ENCODE measurements at regions of chr17 and their contacts with region 1.

Region 1: DNA sequence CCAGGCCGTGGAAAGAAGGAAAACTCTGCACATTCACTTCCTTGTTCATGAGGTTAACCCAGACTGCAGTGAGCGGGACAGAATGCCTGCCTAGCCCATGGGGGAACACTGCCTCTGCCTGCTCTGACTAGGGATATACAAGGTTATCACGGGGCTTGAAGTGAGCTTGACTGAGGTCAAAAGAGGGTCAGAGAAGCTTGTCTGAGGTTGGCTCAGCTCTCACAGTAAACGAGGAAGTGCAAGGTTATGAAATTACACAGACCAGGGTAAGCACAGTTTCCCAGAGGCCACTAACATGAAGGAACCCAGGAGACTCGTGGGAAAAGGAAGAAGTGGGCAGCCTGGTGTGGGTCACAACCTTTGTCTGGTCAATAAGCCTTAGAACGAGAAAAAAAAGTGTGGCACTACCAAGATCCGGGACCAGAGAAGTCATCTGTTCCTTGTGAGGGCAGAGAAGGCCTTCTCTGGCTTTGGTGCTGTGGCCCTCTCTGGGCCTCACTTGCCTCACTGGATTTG is 28.8 kb downstream of the HIC1 start:
- DNase-seq: no peak
- H3K4me3 ChIP-seq: no peak overlapping the region
- H3K27ac ChIP-seq: no peak overlapping the region
- H3K4me1 ChIP-seq: 0 out of 7 replicates have a peak, but pooled peaks cover 0 to 3% (median 0%) of the 10 kb centered on the region in 4 experiments
- H3K27me3 ChIP-seq: no peaks in the 10 kb centered on the region
- CTCF ChIP-seq: no peak
- EP300 ChIP-seq: no peak
- POLR2A ChIP-seq: no peak
- RAD21 ChIP-seq: no peak

Region 2: GRCh38 chr17:1829592-1830257 is 253.9 kb before region 1 on chr17 and contains the starts of genes RPA1 and SMYD4:
- CTCF ChIA-PET with region 1: no interaction called
- POLR2A ChIA-PET with region 1: no interaction called
- DNase-seq: peak; percentile 19 to 91
- H3K4me3 ChIP-seq: peak within 1 kb of the TSS; percentile 82 to 94 (median 85)
- H3K27ac ChIP-seq: 0 out of 2 replicates have a peak within 1 kb of the TSS, but pooled peaks have one; percentile 67
- H3K4me1 ChIP-seq: peaks cover 0 to 2% (median 0%) of the 10 kb centered on the region in 4 experiments; a peak in 1 of 7 replicates
- H3K27me3 ChIP-seq: no peaks in the 10 kb centered on the region
- CTCF ChIP-seq: no peak
- EP300 ChIP-seq: no peak
- POLR2A ChIP-seq: peak in 1 of 2 experiments; percentile 66; a peak in 2 of 3 replicates
- RAD21 ChIP-seq: no peak
- total RNA-seq, gene RPA1: 181 and 194 TPM in 2 replicates
- total RNA-seq, gene SMYD4: 22.0 and 23.4 TPM in 2 replicates

Region 3: GRCh38 chr17:2070241-2071023 is 13.2 kb before region 1 on chr17:
- CTCF ChIA-PET with region 1: interaction called, 21 read pairs
- POLR2A ChIA-PET with region 1: interaction called, 4 read pairs
- DNase-seq: no peak
- H3K4me3 ChIP-seq: no peak overlapping the region
- H3K27ac ChIP-seq: no peak overlapping the region
- H3K4me1 ChIP-seq: peaks cover under 1 to 14% (median 5%) of the 10 kb centered on the region in 4 experiments; a peak in 6 of 7 replicates
- H3K27me3 ChIP-seq: no peaks in the 10 kb centered on the region
- CTCF ChIP-seq: peak; percentile 26 to 53 (median 44)
- EP300 ChIP-seq: no peak
- POLR2A ChIP-seq: no peak
- RAD21 ChIP-seq: peak; percentile 17 to 42; a peak in 2 of 4 replicates

Measured in H1 (cell line).